GM10248 (cell line): ENCODE measurements at regions of chr15 and their contacts with region 1.

Region 1: DNA sequence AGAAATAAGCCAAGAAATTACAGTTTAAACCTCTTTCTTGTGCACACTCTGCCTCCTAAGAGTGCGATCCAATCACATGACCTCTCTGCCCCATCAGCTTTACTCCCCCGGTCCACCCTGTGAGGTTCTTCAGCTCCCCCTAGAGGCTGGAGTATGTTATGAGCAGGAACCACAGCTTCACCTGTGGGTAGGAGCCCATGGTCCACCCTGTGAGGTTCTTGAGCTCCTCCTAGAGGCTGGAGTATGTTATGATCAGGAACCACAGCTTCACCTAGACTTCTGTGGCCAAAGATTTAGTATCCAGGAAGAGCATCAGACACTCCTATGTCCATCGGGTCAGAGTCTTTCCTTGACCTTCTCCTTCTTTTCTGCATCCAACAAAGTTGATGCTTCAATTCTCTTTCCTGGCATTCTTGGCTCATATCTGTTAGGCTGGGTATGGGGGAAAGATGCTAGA is 163.9 kb downstream of the MINAR1 start:
- DNase-seq: peak; percentile 86
- CTCF ChIP-seq: peak; percentile 89

Region 2: GRCh38 chr15:79582650-79583049 is 13.4 kb before region 1 on chr15:
- CTCF ChIA-PET with region 1: interaction called, 23 read pairs
- POLR2A ChIA-PET with region 1: no interaction called
- DNase-seq: no peak
- CTCF ChIP-seq: no peak

Region 3: DNA sequence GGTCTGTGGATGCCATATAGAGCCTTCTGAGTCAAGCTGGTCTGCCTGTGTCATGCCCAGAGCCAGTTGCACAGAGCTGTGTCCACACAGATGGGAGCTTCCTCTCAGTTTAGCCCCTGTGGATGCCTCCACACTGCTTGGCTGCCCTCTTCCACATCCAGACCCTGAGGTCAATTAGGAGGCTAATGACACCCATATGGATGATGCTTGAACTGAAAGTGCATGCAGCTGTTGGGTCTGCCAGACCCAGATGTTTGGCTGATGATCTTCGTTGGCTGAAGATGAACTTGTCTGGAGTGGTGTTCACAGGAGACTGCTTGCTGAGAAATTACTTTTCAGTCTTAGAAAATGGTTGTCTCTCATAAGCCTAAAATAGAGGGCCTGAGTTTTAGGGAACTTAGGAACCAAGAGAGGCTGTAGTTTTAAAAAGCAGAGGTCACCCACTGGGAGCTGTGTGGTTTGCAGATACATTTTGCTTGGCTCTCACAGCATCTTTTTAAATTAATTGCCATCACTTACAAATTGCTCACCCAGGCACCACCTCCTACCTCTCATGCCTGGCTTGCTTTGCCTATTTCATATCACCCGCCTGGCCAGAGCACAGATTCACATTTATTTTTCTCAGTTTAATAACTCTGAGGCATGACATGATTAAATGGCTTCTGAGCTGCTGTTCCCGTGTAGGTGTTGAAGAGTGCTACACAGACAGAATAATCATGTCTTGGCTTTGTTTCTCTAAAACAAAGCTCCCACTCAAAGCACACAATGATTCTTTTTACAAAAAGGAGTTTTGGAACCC is 12.2 kb after region 1 on chr15:
- CTCF ChIA-PET with region 1: interaction called, 34 read pairs
- POLR2A ChIA-PET with region 1: no interaction called
- DNase-seq: no peak
- CTCF ChIP-seq: no peak